CD8-positive, alpha-beta memory T cell (primary cell): ENCODE measurements at regions of chr1 and their contacts with region 1.

Region 1: DNA sequence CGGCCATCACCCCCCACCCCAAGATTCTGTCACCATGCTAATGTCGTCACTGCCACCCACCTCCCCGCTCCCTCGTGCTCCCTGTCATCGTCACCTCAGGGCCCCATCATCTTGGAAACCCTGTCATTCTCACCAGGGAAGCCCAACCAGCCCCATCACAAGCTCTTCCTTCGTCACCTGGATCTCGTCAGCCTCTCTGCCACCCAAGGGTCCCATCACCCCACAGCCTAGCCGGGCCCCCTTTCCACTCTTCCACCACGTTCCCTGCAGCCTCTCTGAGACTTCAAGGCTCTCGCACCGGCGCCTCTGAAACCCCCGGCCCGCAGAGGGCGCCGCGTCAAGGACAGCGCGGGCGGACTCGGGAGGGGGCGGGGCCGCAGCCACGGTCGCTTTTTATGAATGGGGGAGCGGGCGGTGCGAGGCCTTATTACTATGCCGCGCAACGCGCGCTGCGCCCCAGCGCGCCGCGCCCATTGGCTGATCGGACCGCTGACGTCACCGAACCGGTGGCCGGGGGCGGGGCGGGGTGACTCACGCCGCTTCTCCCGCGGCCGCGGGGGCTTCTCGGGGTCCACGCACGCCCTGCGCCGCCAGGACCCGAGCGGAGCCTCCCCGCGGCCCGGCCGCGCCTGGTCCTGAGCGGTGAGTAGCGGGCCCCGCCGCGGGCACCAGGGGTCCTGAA is at the start of gene GPR3:
- DNase-seq: peak; percentile 87 to 94 (median 92)
- H3K4me3 ChIP-seq: peak within 1 kb of the TSS; percentile 69
- H3K4me3 Mint-ChIP-seq: peak within 1 kb of the TSS; percentile 30 to 88 (median 86)
- H3K27ac ChIP-seq: peak within 1 kb of the TSS; percentile 43
- H3K27ac Mint-ChIP-seq: peak within 1 kb of the TSS in 7 of 8 donors; percentile 0 to 95 (median 93)
- H3K4me1 ChIP-seq: peaks cover 17% of the 10 kb centered on the region
- H3K4me1 Mint-ChIP-seq: peaks cover 15 to 22% (median 21%) of the 10 kb centered on the region in 3 donors
- H3K27me3 ChIP-seq: no peaks in the 10 kb centered on the region
- H3K27me3 Mint-ChIP-seq: peaks cover 1 to 12% of the 10 kb centered on the region in 2 donors
- total RNA-seq, gene GPR3: 3.3 to 3.9 TPM

Region 2: DNA sequence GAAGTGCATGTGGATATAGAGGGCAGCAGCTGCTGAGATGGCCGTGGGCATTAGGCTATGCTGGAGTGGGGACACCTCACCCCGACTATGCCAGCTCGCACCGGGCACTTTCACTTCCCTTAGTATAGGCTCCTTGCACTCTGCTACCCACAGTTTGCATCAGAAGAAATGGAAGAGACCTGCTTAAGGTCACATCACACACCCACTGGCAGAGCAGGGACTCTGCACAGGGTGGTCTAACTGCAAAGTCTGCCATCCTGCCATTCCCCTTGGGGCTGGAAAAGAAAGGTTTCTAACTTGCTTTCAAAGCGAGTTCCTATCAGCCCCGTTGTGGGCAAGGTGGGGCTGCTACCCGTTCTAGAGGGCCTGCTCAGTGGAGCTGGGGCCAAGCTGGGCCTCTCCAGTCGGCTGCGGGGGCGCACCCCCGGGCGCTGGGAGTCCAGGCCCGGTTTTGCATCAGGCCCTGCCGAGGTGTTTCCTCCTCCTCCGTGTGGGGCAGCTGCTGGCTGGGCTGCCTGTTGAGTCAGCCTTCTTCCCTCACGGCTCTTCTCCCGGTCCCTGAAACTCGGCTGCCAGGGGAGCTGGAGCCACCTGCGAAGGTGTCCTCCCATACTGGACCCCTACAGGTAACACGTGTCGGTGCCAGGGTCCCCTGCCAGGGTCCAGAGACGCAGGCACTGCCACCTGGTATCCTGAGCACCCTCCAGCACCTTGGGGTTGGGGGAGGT is 50.5 kb before region 1 on chr1 and contains the start of gene SYTL1:
- CTCF ChIA-PET with region 1: interaction called, 13 read pairs
- POLR2A ChIA-PET with region 1: no interaction called
- DNase-seq: peak; percentile 55 to 80 (median 68)
- H3K4me3 ChIP-seq: peak within 1 kb of the TSS; percentile 100
- H3K4me3 Mint-ChIP-seq: peak within 1 kb of the TSS; percentile 92 to 100 (median 96)
- H3K27ac ChIP-seq: peak within 1 kb of the TSS; percentile 85
- H3K27ac Mint-ChIP-seq: peak within 1 kb of the TSS; percentile 90 to 99 (median 96)
- H3K4me1 ChIP-seq: peaks cover 35% of the 10 kb centered on the region
- H3K4me1 Mint-ChIP-seq: peaks cover 39 to 70% (median 54%) of the 10 kb centered on the region in 3 donors
- H3K27me3 ChIP-seq: no peaks in the 10 kb centered on the region
- H3K27me3 Mint-ChIP-seq: no peaks in the 10 kb centered on the region
- total RNA-seq, gene SYTL1: 21.9 to 24.2 TPM

Region 3: GRCh38 chr1:27365372-27366112 is 26.7 kb before region 1 on chr1:
- CTCF ChIA-PET with region 1: interaction called, 50 read pairs
- POLR2A ChIA-PET with region 1: interaction called, 4 read pairs
- DNase-seq: peak; percentile 63 to 83 (median 72)
- H3K4me3 ChIP-seq: peak overlapping the region; percentile 62
- H3K4me3 Mint-ChIP-seq: peak overlapping the region; percentile 85 to 95 (median 87)
- H3K27ac ChIP-seq: peak overlapping the region; percentile 47
- H3K27ac Mint-ChIP-seq: peak overlapping the region in 7 of 8 donors; percentile 51 to 93 (median 78)
- H3K4me1 ChIP-seq: peaks cover 19% of the 10 kb centered on the region
- H3K4me1 Mint-ChIP-seq: peaks cover 16 to 23% (median 22%) of the 10 kb centered on the region in 3 donors
- H3K27me3 ChIP-seq: no peaks in the 10 kb centered on the region
- H3K27me3 Mint-ChIP-seq: no peaks in the 10 kb centered on the region

Region 4: DNA sequence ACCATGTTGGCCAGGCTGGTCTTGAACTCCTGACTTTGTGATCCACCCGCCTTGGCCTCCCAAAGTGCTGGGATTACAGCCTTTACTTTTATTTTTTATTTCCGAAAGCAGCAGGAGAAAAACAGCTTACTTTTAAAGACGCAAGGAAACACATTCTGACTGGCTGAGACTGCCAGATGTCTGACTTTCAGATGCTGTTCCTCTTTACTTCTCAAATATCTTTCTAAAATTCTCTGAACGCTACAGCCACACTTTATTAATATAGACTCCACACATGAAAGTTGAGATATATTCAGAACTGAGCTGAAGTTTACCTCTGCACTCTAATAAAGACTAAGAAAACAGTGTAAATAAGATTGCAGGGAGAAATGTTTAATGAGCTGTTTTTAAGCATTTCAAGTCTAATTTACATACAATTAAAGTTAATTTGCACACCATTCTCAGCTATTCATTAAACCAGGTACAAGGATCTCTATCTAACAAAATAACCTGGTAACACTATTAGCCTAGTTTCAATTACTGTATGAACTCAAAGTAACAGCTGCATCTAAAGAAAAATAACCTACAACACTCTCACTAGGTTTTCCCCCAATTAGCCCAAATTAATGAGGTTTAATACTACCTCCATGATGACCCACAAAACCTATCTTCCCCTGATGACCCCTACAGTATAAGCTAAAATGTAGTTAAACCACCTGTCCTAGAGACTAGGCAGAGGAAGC is 72.8 kb after region 1 on chr1:
- CTCF ChIA-PET with region 1: no interaction called
- POLR2A ChIA-PET with region 1: no interaction called
- DNase-seq: no peak
- H3K4me3 ChIP-seq: no peak overlapping the region
- H3K4me3 Mint-ChIP-seq: no peak overlapping the region
- H3K27ac ChIP-seq: no peak overlapping the region
- H3K27ac Mint-ChIP-seq: peak overlapping the region in 4 of 8 donors; percentile 19 to 71 (median 29)
- H3K4me1 ChIP-seq: peaks cover 12% of the 10 kb centered on the region
- H3K4me1 Mint-ChIP-seq: peaks cover 44 to 62% (median 58%) of the 10 kb centered on the region in 3 donors
- H3K27me3 ChIP-seq: no peaks in the 10 kb centered on the region
- H3K27me3 Mint-ChIP-seq: no peaks in the 10 kb centered on the region

Region 5: GRCh38 chr1:27725374-27726173 is 333.3 kb after region 1 on chr1 and contains the start of gene FAM76A:
- CTCF ChIA-PET with region 1: no interaction called
- POLR2A ChIA-PET with region 1: no interaction called
- DNase-seq: peak; percentile 99 to 100 (median 100)
- H3K4me3 ChIP-seq: peak within 1 kb of the TSS; percentile 66
- H3K4me3 Mint-ChIP-seq: peak within 1 kb of the TSS; percentile 87 to 95 (median 91)
- H3K27ac ChIP-seq: peak within 1 kb of the TSS; percentile 87
- H3K27ac Mint-ChIP-seq: peak within 1 kb of the TSS; percentile 94 to 99 (median 98)
- H3K4me1 ChIP-seq: peaks cover 18% of the 10 kb centered on the region
- H3K4me1 Mint-ChIP-seq: peaks cover 21 to 35% (median 24%) of the 10 kb centered on the region in 3 donors
- H3K27me3 ChIP-seq: no peaks in the 10 kb centered on the region
- H3K27me3 Mint-ChIP-seq: no peaks in the 10 kb centered on the region
- total RNA-seq, gene FAM76A: 13.2 to 13.7 TPM